Activated naive CD4-positive, alpha-beta T cell treated with anti-CD3 and anti-CD28 coated beads for 36 hours (primary cell): ENCODE measurements at regions of chr1 and their contacts with region 1.

Region 1: DNA sequence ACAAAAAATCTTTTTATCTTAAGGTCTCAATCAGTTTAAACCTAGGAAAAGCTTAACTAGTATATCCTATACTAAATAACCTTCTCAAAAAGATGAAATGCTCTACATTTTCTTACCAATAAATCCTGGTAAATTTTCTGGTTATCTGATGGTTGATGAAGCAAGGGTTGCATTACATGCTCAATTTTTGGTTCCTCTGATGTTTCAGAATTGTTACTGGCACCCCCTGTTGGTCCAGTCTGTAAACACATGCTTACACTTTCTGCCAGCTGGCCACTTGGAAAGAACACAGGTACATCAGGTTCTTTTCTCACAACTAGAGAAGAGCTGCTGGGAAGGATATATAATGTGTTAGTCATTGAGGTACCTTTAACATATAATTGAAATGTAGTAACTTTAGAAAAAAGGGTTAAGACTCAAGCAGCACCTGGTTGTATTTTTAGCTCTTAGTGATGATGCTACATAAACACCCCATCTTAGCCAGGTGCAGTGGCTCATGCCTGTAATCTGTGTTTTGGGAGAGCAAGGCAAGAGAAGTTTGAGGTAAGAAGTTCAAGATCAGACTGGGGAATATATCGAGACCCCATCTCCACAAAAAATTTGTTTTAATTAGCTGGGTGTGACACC is 30.9 kb upstream of the TAL1 start:
- DNase-seq: peak; percentile 48
- H3K4me3 Mint-ChIP-seq: no peak overlapping the region
- H3K27ac Mint-ChIP-seq: no peak overlapping the region
- H3K4me1 Mint-ChIP-seq: no peaks in the 10 kb centered on the region
- H3K27me3 Mint-ChIP-seq: no peaks in the 10 kb centered on the region

Region 2: DNA sequence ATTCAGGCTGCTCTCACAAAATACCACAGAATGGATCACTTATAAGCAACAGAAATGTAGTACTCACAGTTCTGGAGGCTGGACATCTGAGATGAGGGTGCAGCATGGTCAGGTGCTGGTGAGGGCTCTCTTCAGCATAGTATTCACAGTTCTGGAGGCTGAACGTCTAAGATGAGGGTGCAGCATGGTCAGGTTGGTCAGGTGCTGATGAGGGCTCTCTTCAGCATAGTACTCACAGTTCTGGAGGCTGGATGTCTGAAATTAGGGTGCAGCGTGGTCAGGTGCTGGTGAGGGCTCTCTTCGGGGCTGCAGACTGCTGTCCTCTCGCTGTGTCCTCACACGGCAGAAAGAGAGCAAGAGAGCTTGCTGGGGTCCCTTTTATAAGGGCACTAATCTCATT is 90.1 kb before region 1 on chr1:
- CTCF ChIA-PET with region 1: no interaction called
- intact Hi-C with region 1: no loop called
- DNase-seq: no peak
- H3K4me3 Mint-ChIP-seq: no peak overlapping the region
- H3K27ac Mint-ChIP-seq: no peak overlapping the region
- H3K4me1 Mint-ChIP-seq: peaks cover 2% of the 10 kb centered on the region
- H3K27me3 Mint-ChIP-seq: peaks cover 28% of the 10 kb centered on the region

Region 3: GRCh38 chr1:47252369-47252768 is 10.5 kb before region 1 on chr1:
- CTCF ChIA-PET with region 1: interaction called, 10 read pairs
- intact Hi-C with region 1: no loop called
- DNase-seq: no peak
- H3K4me3 Mint-ChIP-seq: no peak overlapping the region
- H3K27ac Mint-ChIP-seq: no peak overlapping the region
- H3K4me1 Mint-ChIP-seq: no peaks in the 10 kb centered on the region
- H3K27me3 Mint-ChIP-seq: no peaks in the 10 kb centered on the region